Lower lobe of right lung (tissue), 2 donors: ENCODE measurements at regions of chr2 and their contacts with region 1.

Region 1: DNA sequence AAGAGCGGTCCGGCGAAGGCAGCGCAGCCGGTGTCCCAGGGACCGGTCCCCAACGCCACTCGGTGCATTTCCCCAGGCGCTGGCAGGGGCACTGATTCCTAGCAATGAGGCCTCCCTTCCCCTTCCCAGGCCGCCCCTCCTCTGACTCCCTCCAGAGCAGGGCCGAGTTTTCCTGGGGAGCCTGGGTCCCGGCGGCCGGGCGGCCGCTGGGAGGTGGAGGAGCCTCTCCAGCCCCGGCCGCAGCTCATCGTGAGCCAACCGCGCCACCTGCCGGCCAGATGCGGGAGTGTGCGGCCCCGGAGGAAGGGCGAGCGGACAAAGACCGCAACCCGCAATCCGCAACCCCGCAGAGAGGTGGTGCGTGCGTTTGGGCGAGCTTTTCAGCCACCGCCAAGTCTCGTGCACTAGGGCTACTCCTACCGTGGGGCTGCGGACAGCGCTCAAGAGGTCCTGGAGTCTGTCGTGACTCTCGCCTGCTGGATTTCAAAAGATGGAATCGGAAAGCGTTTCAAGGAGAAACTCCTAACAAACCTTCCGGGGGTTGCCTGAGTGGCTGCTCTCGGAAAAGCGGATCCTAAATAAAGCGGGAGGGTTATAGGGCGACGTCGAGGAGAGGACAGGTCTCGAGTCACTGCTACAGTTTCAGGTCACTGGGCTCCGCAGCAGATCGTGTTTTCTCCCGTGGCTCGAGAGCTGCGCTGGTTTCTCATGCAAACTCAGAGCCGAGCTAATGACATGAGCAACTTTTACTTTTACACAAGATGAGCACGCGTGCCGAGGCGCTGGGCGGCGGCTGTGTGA is 1.5 kb upstream of the EPHA4 start:
- DNase-seq: peak; percentile 88
- ATAC-seq: peak; percentile 86 to 89
- H3K4me3 ChIP-seq: peak overlapping the region; percentile 75
- H3K27ac ChIP-seq: peak overlapping the region; percentile 77
- H3K4me1 ChIP-seq: peaks cover 26% of the 10 kb centered on the region
- H3K27me3 ChIP-seq: peaks cover 19% of the 10 kb centered on the region
- CTCF ChIP-seq: peak; percentile 97

Region 2: GRCh38 chr2:220687231-220687843 is 886.3 kb before region 1 on chr2:
- intact Hi-C with region 1: loop called (anchors 10 kb)
- DNase-seq: peak; percentile 60
- ATAC-seq: peak; percentile 88 to 89
- H3K4me3 ChIP-seq: no peak overlapping the region
- H3K27ac ChIP-seq: no peak overlapping the region
- H3K4me1 ChIP-seq: no peaks in the 10 kb centered on the region
- H3K27me3 ChIP-seq: no peaks in the 10 kb centered on the region
- CTCF ChIP-seq: peak; percentile 88